Naive thymus-derived CD4-positive, alpha-beta T cell (primary cell): ENCODE measurements at regions of chr12 and their contacts with region 1.

Region 1: DNA sequence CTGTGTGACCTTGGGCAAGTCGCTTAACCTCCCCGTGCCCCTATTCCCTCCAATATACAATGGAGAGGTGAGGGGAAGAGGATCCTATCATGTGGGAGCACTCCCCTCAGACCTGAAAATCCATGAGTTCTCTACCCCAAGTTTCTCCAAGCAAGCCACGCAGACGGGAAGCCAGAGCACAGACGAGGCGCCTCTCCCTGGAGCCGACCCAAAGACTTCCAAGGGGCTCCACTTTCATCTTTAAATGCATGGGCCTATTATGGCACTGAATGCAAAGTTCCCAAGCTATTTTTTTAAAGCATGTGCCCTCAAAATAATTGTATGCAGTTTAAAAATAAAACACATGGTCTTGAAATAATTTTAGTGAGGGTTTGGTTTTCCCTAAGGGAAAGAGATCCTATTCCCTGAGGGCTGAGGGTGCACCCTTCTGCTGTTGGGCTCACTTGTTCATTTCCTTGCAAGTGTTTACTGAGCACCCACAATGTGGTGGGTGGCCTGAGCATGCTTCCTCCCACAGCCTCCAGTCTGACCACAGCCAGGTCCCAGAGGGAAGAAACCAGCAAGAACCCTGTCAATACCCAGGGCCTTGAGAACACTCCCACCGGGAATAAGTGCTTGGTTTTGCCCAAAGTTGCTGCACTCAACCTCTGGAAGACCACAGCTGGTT is 14.6 kb downstream of the CMKLR1 start:
- DNase-seq: no peak
- ATAC-seq: no peak
- H3K4me3 ChIP-seq: no peak overlapping the region
- H3K4me3 Mint-ChIP-seq: no peak overlapping the region
- H3K27ac ChIP-seq: no peak overlapping the region
- H3K27ac Mint-ChIP-seq: no peak overlapping the region
- H3K4me1 ChIP-seq: no peaks in the 10 kb centered on the region
- H3K4me1 Mint-ChIP-seq: peaks cover 0 to 6% (median 0%) of the 10 kb centered on the region in 7 donors
- H3K27me3 ChIP-seq: no peaks in the 10 kb centered on the region
- H3K27me3 Mint-ChIP-seq: peaks cover 0 to 35% (median 12%) of the 10 kb centered on the region in 5 donors

Region 2: DNA sequence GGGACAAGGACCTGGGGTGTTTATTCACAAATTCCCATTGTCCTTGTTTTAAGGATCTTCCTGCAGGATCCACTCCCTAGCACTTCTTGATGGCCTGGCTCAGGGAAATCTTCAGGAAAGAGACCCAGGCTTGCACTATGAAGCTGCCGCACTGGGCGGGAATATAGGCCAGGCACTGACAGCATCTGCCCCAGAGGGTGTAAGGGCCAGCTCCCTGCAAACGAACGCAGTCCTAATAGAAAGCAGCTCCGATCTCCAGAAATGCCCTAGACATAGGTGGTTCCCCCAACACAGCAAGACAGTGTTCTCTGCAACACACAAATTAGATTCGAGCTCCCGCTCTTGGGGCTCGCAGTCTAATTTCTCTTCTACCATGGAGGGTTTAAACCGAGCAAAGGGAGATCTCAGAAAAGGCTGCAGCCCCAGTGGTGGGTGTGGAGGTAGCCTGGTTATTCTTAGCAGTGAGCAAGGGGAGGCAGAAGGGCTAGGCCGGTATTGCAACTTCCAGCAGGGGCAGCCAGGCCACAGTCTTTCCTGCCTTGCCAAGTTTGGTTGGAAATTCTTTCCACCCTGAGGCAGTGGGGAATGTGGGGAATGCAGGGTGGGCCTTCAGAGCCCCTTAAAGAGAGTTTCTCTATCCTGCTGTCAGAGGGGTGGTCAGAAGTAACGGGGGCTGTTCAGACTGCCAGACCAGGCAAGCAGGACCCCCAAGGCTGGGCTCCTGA is 211.5 kb before region 1 on chr12:
- CTCF ChIA-PET with region 1: no interaction called
- POLR2A ChIA-PET with region 1: no interaction called
- intact Hi-C with region 1: no loop called
- DNase-seq: no peak
- ATAC-seq: no peak
- H3K4me3 ChIP-seq: no peak overlapping the region
- H3K4me3 Mint-ChIP-seq: no peak overlapping the region
- H3K27ac ChIP-seq: no peak overlapping the region
- H3K27ac Mint-ChIP-seq: no peak overlapping the region
- H3K4me1 ChIP-seq: no peaks in the 10 kb centered on the region
- H3K4me1 Mint-ChIP-seq: peaks cover 0 to 2% (median 0%) of the 10 kb centered on the region in 7 donors
- H3K27me3 ChIP-seq: no peaks in the 10 kb centered on the region
- H3K27me3 Mint-ChIP-seq: peaks cover 5 to 26% (median 11%) of the 10 kb centered on the region in 5 donors

Region 3: DNA sequence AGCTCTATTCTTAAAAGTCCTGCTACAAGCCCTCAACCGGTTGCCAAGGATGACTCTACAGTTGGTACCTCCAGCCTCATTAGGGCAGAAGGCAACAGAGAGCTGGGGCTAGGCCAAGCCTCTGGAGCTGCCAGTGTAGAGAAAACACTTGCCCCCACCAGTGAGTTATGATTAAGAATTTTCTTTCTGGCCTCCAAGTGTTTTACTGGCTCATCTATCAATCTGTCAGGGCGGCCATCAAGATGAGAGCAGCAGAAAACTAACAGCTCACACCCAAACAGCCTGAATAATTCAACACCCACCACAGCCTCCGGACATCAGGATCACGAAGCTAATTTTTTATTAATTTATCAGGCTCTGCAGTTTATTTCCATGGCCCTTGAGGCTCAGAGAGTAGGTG is 55.3 kb after region 1 on chr12:
- CTCF ChIA-PET with region 1: no interaction called
- POLR2A ChIA-PET with region 1: no interaction called
- intact Hi-C with region 1: loop called in 1 of 2 experiments (anchors 2 kb)
- DNase-seq: no peak
- ATAC-seq: no peak
- H3K4me3 ChIP-seq: no peak overlapping the region
- H3K4me3 Mint-ChIP-seq: no peak overlapping the region
- H3K27ac ChIP-seq: no peak overlapping the region
- H3K27ac Mint-ChIP-seq: no peak overlapping the region
- H3K4me1 ChIP-seq: no peaks in the 10 kb centered on the region
- H3K4me1 Mint-ChIP-seq: peaks cover 0 to 1% (median 0%) of the 10 kb centered on the region in 7 donors
- H3K27me3 ChIP-seq: no peaks in the 10 kb centered on the region
- H3K27me3 Mint-ChIP-seq: peaks cover 0 to 40% (median 21%) of the 10 kb centered on the region in 5 donors